ENCODE measurements at regions of chr15 and their contacts with region 1.

Region 1: GRCh38 chr15:92097474-92098178 is 244.1 kb downstream of the SLCO3A1 start:
- DNase-seq: peak; percentile 70
- ATAC-seq: peak; percentile 82
- H3K4me3 Mint-ChIP-seq: no peak overlapping the region
- H3K27ac Mint-ChIP-seq: no peak overlapping the region
- H3K4me1 Mint-ChIP-seq: peaks cover 40% of the 10 kb centered on the region
- H3K27me3 Mint-ChIP-seq: no peaks in the 10 kb centered on the region

Region 2: GRCh38 chr15:92205255-92205739 is 107.7 kb after region 1 on chr15:
- CTCF ChIA-PET with region 1: interaction called, 3 read pairs
- POLR2A ChIA-PET with region 1: no interaction called
- intact Hi-C with region 1: loop called in 1 of 2 experiments (anchors 5 kb)
- DNase-seq: no peak
- ATAC-seq: no peak
- H3K4me3 Mint-ChIP-seq: no peak overlapping the region
- H3K27ac Mint-ChIP-seq: no peak overlapping the region
- H3K4me1 Mint-ChIP-seq: no peaks in the 10 kb centered on the region
- H3K27me3 Mint-ChIP-seq: peaks cover 17% of the 10 kb centered on the region

Region 3: GRCh38 chr15:92226014-92226612 is 128.5 kb after region 1 on chr15:
- CTCF ChIA-PET with region 1: interaction called, 4 read pairs
- POLR2A ChIA-PET with region 1: no interaction called
- intact Hi-C with region 1: loop called (anchors 1 kb)
- DNase-seq: peak; percentile 5
- ATAC-seq: peak; percentile 42
- H3K4me3 Mint-ChIP-seq: no peak overlapping the region
- H3K27ac Mint-ChIP-seq: no peak overlapping the region
- H3K4me1 Mint-ChIP-seq: no peaks in the 10 kb centered on the region
- H3K27me3 Mint-ChIP-seq: no peaks in the 10 kb centered on the region

Region 4: GRCh38 chr15:92383519-92384326 is 286.1 kb after region 1 on chr15:
- CTCF ChIA-PET with region 1: interaction called, 6 read pairs
- POLR2A ChIA-PET with region 1: no interaction called
- intact Hi-C with region 1: loop called (anchors 1 kb)
- DNase-seq: peak; percentile 66
- ATAC-seq: peak; percentile 63
- H3K4me3 Mint-ChIP-seq: no peak overlapping the region
- H3K27ac Mint-ChIP-seq: no peak overlapping the region
- H3K4me1 Mint-ChIP-seq: no peaks in the 10 kb centered on the region
- H3K27me3 Mint-ChIP-seq: peaks cover 36% of the 10 kb centered on the region

Region 5: GRCh38 chr15:92521624-92522008 is 424.0 kb after region 1 on chr15:
- CTCF ChIA-PET with region 1: interaction called, 3 read pairs
- POLR2A ChIA-PET with region 1: no interaction called
- intact Hi-C with region 1: loop called in 1 of 2 experiments (anchors 10 kb)
- DNase-seq: peak; percentile 75
- ATAC-seq: peak; percentile 83
- H3K4me3 Mint-ChIP-seq: no peak overlapping the region
- H3K27ac Mint-ChIP-seq: no peak overlapping the region
- H3K4me1 Mint-ChIP-seq: peaks cover 8% of the 10 kb centered on the region
- H3K27me3 Mint-ChIP-seq: no peaks in the 10 kb centered on the region

Measured in activated CD4-positive, alpha-beta T cell treated with anti-CD3 and anti-CD28 coated beads for 36 hours (primary cell).